ENCODE measurements at regions of chr1 and their contacts with region 1.

Region 1: DNA sequence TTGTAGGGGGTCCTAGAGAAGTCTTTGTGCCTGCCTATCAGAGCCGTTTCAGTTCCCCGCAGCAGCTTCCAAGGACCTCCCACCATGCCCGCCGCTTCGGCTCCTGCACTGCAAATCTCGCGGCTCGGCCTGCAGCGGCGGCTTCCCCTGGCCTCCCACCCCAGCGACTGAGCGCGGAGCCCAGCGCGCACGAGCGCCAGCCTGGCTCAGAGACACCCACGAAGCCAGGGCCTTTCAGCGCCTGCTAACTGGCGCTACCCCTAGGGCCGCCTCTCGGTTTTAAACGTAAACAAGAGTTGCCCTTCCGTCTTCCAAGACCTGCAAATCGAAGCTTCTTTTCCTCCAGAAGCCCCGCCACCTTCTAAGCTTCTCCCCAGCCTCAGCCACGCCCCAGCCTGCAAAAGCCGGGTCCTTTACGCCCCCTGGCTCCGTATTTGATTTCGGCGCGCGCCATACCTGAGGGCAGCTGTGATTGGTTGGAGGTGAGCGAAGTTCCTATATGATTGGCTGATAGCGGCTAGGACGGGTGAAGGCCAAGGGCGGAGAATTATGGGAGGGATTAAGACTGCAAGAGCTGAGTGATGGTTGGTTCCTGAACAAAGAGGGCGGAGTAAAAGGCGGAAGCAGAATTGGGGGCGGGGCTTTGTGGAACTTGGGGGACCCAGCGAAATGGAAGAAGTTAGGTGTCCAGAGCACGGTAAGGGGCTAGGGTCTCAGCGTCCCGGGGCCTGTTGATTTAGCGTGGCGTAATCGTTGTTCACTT is at the start of gene TTF2:
- DNase-seq: peak; percentile 97
- ATAC-seq: peak; percentile 91
- H3K4me3 Mint-ChIP-seq: no peak within 1 kb of the TSS
- H3K27ac Mint-ChIP-seq: no peak within 1 kb of the TSS
- H3K4me1 Mint-ChIP-seq: peaks cover 47% of the 10 kb centered on the region
- H3K27me3 Mint-ChIP-seq: no peaks in the 10 kb centered on the region
- CTCF ChIP-seq: no peak
- total RNA-seq, gene TTF2: 126 to 127 TPM

Region 2: GRCh38 chr1:116472431-116472961 is 587.4 kb before region 1 on chr1:
- CTCF ChIA-PET with region 1: no interaction called
- POLR2A ChIA-PET with region 1: no interaction called
- intact Hi-C with region 1: no loop called
- DNase-seq: no peak
- ATAC-seq: no peak
- H3K4me3 Mint-ChIP-seq: no peak overlapping the region
- H3K27ac Mint-ChIP-seq: no peak overlapping the region
- H3K4me1 Mint-ChIP-seq: no peaks in the 10 kb centered on the region
- H3K27me3 Mint-ChIP-seq: no peaks in the 10 kb centered on the region
- CTCF ChIP-seq: no peak

Region 3: DNA sequence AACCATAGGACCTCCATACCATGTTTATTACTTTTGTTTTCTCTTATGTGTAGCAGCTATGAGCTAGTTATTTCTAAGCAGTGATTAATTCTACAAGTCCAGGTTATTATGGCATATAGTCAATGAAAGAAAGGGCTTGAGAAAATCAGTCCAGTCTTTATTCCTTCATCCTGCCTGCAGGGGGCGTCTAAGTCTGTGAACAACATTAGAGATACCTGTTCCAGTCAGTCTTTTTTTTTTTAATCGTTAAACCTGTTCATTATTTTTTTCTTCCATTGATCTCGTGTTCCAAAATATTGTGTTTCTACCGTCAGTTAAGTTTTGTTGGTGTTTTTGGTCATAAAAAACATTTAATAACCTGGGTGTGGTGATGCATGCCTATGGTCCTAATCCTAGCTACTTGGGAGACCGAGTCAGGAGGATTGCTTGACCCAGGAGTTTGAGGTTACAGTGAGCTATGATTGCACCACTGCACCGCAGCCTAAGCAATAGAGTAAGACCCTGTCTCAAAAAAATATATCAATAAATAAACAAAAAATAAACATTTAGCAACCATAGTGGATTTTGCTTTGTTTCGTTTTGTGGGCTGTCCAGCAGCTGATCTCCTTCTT is 335.0 kb before region 1 on chr1:
- CTCF ChIA-PET with region 1: interaction called, 20 read pairs
- POLR2A ChIA-PET with region 1: interaction called, 3 read pairs
- intact Hi-C with region 1: no loop called
- DNase-seq: peak; percentile 92
- ATAC-seq: peak; percentile 84
- H3K4me3 Mint-ChIP-seq: no peak overlapping the region
- H3K27ac Mint-ChIP-seq: peak overlapping the region; percentile 28
- H3K4me1 Mint-ChIP-seq: peaks cover 34% of the 10 kb centered on the region
- H3K27me3 Mint-ChIP-seq: no peaks in the 10 kb centered on the region
- CTCF ChIP-seq: peak; percentile 90

Region 4: DNA sequence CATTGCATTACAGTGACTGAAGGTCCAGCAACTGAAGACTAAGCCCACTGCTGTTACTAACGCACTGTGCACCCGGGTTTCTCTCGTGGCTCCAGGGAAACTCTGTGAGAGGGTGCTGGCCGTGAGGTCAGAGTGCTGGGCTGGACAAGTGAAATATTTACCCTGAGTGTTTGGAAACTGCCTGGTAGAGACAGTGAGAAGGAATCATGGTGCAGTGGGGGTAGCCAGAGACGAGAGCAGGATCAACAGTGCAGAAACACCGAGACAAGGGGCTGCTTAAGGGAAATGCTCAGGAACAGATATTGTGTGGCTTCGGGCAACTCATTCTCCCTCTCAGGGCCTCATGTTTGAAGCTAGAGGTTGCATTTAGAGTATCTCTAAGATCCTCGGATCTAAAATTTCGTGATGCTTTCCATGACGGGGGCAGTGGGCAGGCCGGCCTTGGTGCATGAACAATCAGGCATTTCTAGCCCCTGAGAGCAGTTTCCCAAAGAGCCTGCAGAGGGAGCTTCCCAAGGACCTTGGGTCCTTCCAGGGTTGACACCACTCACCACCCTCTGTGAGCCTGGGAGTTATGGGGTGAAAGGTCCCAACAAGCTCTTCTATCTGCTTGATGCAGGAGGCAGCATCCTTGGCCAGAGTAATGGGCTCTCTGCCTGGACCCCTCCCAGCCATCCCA is 295.9 kb before region 1 on chr1:
- CTCF ChIA-PET with region 1: interaction called, 14 read pairs
- POLR2A ChIA-PET with region 1: interaction called, 108 read pairs
- intact Hi-C with region 1: loop called (anchors 5 kb)
- DNase-seq: peak; percentile 86
- ATAC-seq: peak; percentile 21
- H3K4me3 Mint-ChIP-seq: peak overlapping the region; percentile 98
- H3K27ac Mint-ChIP-seq: peak overlapping the region; percentile 99
- H3K4me1 Mint-ChIP-seq: peaks cover 83% of the 10 kb centered on the region
- H3K27me3 Mint-ChIP-seq: no peaks in the 10 kb centered on the region
- CTCF ChIP-seq: peak; percentile 39

Region 5: GRCh38 chr1:116817582-116818064 is 242.2 kb before region 1 on chr1:
- CTCF ChIA-PET with region 1: interaction called, 4 read pairs
- POLR2A ChIA-PET with region 1: interaction called, 11 read pairs
- intact Hi-C with region 1: loop called (anchors 5 kb)
- DNase-seq: peak; percentile 80
- ATAC-seq: peak; percentile 67
- H3K4me3 Mint-ChIP-seq: peak overlapping the region; percentile 52
- H3K27ac Mint-ChIP-seq: peak overlapping the region; percentile 96
- H3K4me1 Mint-ChIP-seq: peaks cover 52% of the 10 kb centered on the region
- H3K27me3 Mint-ChIP-seq: no peaks in the 10 kb centered on the region
- CTCF ChIP-seq: peak; percentile 95

Region 6: DNA sequence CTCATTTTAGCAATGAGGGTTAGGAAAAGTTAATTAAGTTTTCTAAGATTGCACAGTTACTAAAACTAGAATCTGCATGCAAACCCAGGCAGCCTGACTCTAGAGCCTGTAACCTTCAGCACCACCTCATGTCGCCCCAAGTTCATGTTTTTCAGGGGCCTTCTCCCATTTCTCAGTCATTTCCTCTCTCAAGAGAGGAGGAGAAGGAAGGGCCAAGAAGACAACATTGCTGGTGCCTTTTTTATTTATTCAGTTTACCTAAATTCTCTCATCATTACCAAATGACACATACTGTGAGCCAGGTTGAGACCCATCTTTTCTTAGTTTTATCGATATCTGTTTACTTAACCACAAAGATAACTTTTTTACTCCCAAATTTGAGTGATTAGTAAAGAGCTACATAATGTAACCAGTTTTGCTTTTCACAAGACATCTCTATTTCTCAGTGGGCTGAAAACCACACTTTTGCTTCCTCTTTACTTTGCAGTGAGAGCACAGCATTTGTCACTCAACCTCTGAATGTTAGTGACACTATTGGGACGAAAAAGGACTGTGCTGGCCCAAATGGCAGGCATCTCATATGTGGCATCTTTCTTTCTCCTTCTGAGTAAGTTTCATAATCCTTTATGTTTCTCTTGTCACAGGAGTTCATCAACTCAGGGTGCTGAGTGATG is 58.5 kb before region 1 on chr1 and contains the start of gene CD101:
- CTCF ChIA-PET with region 1: no interaction called
- POLR2A ChIA-PET with region 1: interaction called, 8 read pairs
- intact Hi-C with region 1: loop called (anchors 5 kb)
- DNase-seq: peak; percentile 64
- ATAC-seq: peak; percentile 91
- H3K4me3 Mint-ChIP-seq: peak within 1 kb of the TSS; percentile 52
- H3K27ac Mint-ChIP-seq: peak within 1 kb of the TSS; percentile 89
- H3K4me1 Mint-ChIP-seq: peaks cover 59% of the 10 kb centered on the region
- H3K27me3 Mint-ChIP-seq: no peaks in the 10 kb centered on the region
- CTCF ChIP-seq: no peak
- total RNA-seq, gene CD101: 2.5 to 3.2 TPM

Region 7: GRCh38 chr1:117093870-117094621 is 34.2 kb after region 1 on chr1:
- CTCF ChIA-PET with region 1: interaction called, 14 read pairs
- POLR2A ChIA-PET with region 1: interaction called, 12 read pairs
- intact Hi-C with region 1: no loop called
- DNase-seq: peak; percentile 63
- ATAC-seq: peak; percentile 99
- H3K4me3 Mint-ChIP-seq: no peak overlapping the region
- H3K27ac Mint-ChIP-seq: peak overlapping the region; percentile 20
- H3K4me1 Mint-ChIP-seq: peaks cover 23% of the 10 kb centered on the region
- H3K27me3 Mint-ChIP-seq: no peaks in the 10 kb centered on the region
- CTCF ChIP-seq: peak; percentile 56

Region 8: GRCh38 chr1:117632269-117633067 is 572.6 kb after region 1 on chr1:
- CTCF ChIA-PET with region 1: no interaction called
- POLR2A ChIA-PET with region 1: no interaction called
- intact Hi-C with region 1: no loop called
- DNase-seq: no peak
- ATAC-seq: no peak
- H3K4me3 Mint-ChIP-seq: no peak overlapping the region
- H3K27ac Mint-ChIP-seq: no peak overlapping the region
- H3K4me1 Mint-ChIP-seq: peaks cover 19% of the 10 kb centered on the region
- H3K27me3 Mint-ChIP-seq: peaks cover 37% of the 10 kb centered on the region
- CTCF ChIP-seq: no peak

Measured in activated CD8-positive, alpha-beta T cell treated with anti-CD3 and anti-CD28 coated beads for 36 hours (primary cell).